PC-9 (cell line): ENCODE measurements at regions of chr2 and their contacts with region 1.

Region 1: GRCh38 chr2:30273261-30273861 is 42.0 kb downstream of the LBH start:
- DNase-seq: peak; percentile 77 to 91
- H3K4me3 ChIP-seq: peak overlapping the region; percentile 15; the same call in 1 of the 2 replicates
- H3K27ac ChIP-seq: peak overlapping the region; percentile 68
- H3K4me1 ChIP-seq: peaks cover 57% of the 10 kb centered on the region
- H3K27me3 ChIP-seq: no peaks in the 10 kb centered on the region
- CTCF ChIP-seq: no peak

Region 2: DNA sequence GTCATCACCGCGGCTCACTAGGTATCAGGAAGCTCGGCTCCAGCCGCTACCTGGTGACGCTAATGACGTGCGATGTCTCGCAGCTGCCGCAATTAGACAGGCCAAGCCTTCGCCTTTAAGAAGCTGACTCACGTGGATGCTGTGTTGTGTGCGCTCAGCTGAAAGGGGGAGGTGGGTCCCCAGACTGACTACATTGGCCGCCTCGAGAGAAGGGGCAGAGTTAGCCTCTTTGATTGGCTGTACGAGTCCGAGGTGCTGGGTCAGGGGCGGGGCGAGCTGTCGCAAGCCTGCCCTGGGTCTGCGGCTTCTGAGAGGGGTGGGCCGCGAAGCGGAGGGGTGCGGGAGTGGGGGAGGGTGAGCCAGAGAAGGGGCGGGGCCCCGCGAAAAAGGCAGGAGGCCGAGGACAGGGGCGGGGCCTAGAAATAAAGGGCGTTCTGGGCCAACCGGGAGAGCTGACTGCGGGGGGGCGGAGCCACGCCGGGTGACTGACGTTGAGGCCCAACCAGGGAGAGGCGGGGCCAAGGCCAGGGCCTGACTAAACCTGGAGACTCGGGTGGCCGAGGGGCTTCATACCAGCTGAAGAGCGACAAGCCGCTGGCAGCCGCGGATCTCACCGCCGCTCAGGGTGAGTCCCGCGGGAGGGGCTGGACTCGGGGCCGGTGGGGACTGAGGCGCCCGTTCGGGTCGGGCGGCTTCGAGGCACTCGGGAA is 126.8 kb before region 1 on chr2 and contains the start of gene YPEL5:
- CTCF ChIA-PET with region 1: no interaction called
- POLR2A ChIA-PET with region 1: no interaction called
- intact Hi-C with region 1: loop called (anchors 1 kb)
- DNase-seq: peak; percentile 99 to 100
- H3K4me3 ChIP-seq: peak within 1 kb of the TSS; percentile 83
- H3K27ac ChIP-seq: peak within 1 kb of the TSS; percentile 50
- H3K4me1 ChIP-seq: peaks cover 39% of the 10 kb centered on the region
- H3K27me3 ChIP-seq: no peaks in the 10 kb centered on the region
- CTCF ChIP-seq: no peak
- total RNA-seq, gene YPEL5: 56.9 and 67.5 TPM in 2 replicates

Region 3: DNA sequence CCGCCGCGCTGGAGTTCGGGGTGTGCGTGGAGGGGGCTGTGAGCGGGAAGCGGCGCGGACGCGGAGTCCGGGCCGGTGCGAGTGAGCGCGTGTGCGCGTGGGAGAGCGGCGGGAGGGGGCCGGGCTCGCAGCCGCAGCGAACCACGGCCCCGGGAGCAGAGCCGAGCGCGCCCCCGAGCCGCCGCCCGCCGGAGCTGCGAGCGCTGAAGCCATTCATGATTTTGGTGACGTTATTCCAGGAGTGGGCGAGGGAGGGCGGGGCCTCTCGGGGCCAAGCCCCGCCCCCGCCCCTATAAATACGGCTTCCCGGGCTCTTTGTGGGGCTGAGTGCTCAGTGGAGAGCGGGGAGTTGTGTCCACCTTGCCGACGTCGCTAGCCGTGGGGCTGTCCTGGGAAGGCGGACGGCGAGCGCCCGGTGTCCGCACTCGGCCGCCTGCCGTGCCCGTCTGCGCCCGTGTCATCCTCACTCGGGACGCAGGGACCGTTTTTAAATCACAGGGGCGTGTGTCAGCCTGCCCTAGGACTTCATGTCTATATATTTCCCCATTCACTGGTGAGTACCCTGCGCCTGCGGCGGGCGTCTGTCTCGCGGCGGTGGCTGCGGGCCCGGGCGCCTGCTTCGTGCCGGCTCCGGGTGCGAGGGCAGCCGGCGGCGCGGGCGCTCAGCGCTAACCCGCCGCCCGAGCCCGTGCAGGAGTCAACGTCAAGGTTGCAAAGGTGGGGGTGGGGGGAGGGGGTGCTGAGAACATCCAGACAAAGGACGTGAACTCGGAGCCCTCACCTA is 42.0 kb before region 1 on chr2 and contains the start of gene LBH:
- CTCF ChIA-PET with region 1: no interaction called
- POLR2A ChIA-PET with region 1: no interaction called
- intact Hi-C with region 1: loop called (anchors 1 kb)
- DNase-seq: peak in 1 of 2 experiments; percentile 34
- H3K4me3 ChIP-seq: no peak within 1 kb of the TSS
- H3K27ac ChIP-seq: no peak within 1 kb of the TSS
- H3K4me1 ChIP-seq: peaks cover 18% of the 10 kb centered on the region
- H3K27me3 ChIP-seq: 0 out of 2 replicates have a peak, but pooled peaks cover 11% of the 10 kb centered on the region
- CTCF ChIP-seq: no peak
- total RNA-seq, gene LBH: 30.6 and 34.4 TPM in 2 replicates

Region 4: DNA sequence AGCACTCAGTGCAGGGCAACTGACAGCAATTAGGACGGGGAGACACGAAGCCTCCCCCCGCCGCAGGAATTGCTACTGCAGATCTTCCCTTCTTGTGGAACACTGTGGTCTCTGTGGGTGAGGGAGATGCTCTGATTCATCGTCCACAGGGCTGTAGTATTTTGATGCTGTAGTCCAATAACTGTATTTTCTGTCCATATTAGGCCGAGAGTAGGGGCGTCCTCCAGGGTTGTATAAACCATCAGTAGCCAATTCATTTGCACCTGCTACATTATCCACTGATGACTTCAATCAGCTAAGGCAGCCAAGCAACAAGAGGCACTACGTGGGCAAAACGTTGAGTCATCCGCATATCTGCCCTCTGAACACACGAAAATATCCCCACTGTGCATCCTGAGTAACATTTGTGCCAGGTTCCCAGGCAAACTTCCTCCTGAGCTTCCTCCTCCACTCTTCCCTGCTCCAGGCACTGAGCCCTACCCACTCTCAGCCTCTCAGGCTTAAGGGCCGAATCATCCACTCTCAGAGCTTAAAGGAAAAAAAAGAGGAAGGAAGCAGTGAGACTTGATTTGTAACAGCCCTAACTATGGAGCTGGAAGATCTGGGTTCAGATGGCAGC is 20.1 kb after region 1 on chr2:
- CTCF ChIA-PET with region 1: no interaction called
- POLR2A ChIA-PET with region 1: no interaction called
- intact Hi-C with region 1: no loop called
- DNase-seq: peak; percentile 48 to 90
- H3K4me3 ChIP-seq: no peak overlapping the region
- H3K27ac ChIP-seq: peak overlapping the region; percentile 43
- H3K4me1 ChIP-seq: peaks cover 15% of the 10 kb centered on the region
- H3K27me3 ChIP-seq: no peaks in the 10 kb centered on the region
- CTCF ChIP-seq: no peak

Region 5: DNA sequence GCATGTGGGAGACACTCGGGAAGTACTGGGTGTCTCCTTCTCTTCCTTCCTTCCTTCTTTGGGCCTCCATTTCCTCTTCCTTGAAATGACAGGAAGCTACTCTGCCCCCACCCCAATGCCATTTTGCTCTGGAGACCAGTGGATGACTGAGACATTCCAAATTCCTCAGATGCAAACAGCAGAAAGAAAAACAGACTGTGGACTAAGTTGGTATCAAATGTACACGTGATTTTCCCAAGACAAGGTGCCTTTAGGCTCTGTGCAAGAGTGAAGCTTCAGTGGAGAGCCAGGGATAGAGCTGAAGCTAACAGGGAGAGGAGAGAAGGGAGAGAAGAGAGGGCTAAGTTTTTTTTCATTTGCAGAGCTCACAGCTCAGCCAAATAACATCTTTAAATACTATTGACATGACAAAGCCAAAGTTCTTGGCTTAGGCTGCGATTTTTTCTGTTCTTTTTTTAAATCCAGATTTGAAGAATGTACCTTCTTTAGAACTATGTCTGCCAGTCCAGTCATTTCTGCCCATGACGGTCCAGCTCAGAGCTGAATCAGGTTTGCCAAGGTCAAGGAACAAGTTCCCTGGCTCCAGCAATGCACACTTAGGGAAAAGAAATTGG is 89.2 kb after region 1 on chr2:
- CTCF ChIA-PET with region 1: interaction called, 7 read pairs
- POLR2A ChIA-PET with region 1: interaction called, 4 read pairs
- intact Hi-C with region 1: loop called (anchors 1 kb)
- DNase-seq: peak; percentile 45 to 91
- H3K4me3 ChIP-seq: no peak overlapping the region
- H3K27ac ChIP-seq: peak overlapping the region; percentile 73
- H3K4me1 ChIP-seq: peaks cover 35% of the 10 kb centered on the region
- H3K27me3 ChIP-seq: no peaks in the 10 kb centered on the region
- CTCF ChIP-seq: no peak

Region 6: GRCh38 chr2:30664761-30665358 is 391.5 kb after region 1 on chr2:
- CTCF ChIA-PET with region 1: no interaction called
- POLR2A ChIA-PET with region 1: no interaction called
- intact Hi-C with region 1: loop called (anchors 2 kb)
- DNase-seq: peak; percentile 69 to 86
- H3K4me3 ChIP-seq: no peak overlapping the region
- H3K27ac ChIP-seq: peak overlapping the region; percentile 82
- H3K4me1 ChIP-seq: peaks cover 36% of the 10 kb centered on the region
- H3K27me3 ChIP-seq: no peaks in the 10 kb centered on the region
- CTCF ChIP-seq: no peak